ENCODE measurements at regions of chr3 and their contacts with region 1.

Region 1: DNA sequence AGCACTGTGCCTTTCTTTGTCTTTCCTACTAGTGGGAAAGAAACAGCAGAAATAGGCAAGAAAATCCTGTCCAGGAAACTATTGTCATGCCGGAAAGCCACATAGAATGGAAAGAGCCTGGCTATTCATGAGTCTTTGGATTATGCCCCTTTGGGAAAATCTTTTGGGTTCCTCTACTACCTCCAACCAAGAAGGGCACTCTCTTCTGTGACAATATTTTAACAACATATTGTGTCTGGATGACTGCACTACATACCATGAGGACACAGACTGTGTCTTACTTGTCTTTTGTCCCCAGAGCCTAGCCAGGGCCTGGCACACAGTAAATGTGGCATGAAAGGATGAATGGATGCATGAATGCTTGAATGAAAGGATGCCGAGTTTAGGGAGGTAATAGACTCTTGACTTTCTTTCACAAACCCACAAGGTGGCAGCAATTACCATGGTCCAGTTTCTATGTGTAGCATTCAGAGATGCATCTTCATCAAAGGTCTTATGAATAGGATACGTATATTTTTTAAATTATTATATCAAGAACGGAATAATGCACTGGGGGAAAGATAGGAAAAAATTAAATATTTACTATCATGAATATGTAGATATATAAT is 30.3 kb downstream of the ARL14 start:
- DNase-seq: peak in 1 of 2 donors; percentile 61
- ATAC-seq: peak; percentile 64 to 82 (median 79)
- H3K4me3 ChIP-seq: no peak overlapping the region
- H3K27ac ChIP-seq: no peak overlapping the region
- H3K4me1 ChIP-seq: no peaks in the 10 kb centered on the region
- H3K27me3 ChIP-seq: peaks cover 0 to 19% (median 0%) of the 10 kb centered on the region in 7 donors
- CTCF ChIP-seq: peak; percentile 31 to 78 (median 67)

Region 2: DNA sequence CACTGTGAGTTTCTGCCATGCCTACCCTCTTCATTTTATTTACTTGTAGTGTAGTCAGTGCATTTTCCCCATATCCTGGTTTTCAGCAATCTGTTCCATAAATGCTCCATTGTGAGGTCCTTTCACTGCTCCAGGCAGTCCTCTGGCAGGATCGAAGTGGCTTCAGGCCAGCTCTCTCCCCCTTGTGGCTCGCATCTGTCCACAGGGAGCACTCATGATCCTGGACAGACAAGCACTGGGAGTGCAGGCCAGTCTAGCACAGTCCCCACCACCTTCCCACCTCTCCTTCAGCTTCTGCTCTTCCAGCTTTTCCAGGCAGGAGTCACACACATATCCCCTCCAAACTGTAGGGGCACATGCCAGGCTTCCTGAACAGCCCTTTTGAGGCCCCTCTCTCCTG is 222.3 kb after region 1 on chr3:
- intact Hi-C with region 1: loop called in 1 of 10 experiments (anchors 5 kb)
- DNase-seq: peak; percentile 57 to 69
- ATAC-seq: peak; percentile 72 to 94 (median 90)
- H3K4me3 ChIP-seq: no peak overlapping the region
- H3K27ac ChIP-seq: no peak overlapping the region
- H3K4me1 ChIP-seq: peaks cover 0 to 43% (median 12%) of the 10 kb centered on the region in 9 donors
- H3K27me3 ChIP-seq: no peaks in the 10 kb centered on the region
- CTCF ChIP-seq: peak in 7 of 9 donors; percentile 26 to 53 (median 44)

Measured in heart right ventricle (tissue), 16 donors.